Activated CD4-positive, alpha-beta memory T cell treated with anti-CD3 and anti-CD28 coated beads for 36 hours (primary cell): ENCODE measurements at regions of chr6 and their contacts with region 1.

Region 1: DNA sequence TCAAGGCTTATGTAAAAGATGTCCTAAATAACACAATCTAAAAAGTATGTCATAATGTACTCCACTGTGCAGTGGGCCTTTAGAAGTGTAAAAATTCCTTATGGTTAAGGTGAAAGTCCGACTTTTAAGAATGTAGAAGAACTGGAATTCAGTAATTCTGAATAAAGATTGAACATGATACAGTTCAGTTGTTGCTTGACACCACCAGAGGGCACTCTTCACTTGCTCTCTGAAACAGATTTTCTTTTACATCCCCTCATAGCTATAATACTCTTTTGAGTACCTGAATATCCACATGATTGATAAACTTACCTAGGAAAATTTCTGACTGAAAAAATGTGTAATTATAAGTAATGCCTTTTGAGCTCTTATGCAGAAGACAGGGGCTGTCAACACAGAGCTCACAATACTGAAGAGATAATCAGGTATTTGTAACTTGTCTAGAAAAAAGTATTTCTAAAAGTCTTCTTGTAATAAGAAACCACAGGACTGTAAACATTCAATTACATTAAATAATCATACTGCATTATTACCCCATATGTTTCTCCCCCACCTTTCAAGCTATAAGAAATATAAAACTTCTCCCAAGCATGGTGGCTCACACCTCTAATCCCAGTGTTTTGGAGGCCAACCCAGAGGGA is 92.1 kb downstream of the POPDC3 start:
- DNase-seq: no peak
- H3K4me3 Mint-ChIP-seq: no peak overlapping the region
- H3K27ac Mint-ChIP-seq: no peak overlapping the region
- H3K4me1 Mint-ChIP-seq: no peaks in the 10 kb centered on the region
- H3K27me3 Mint-ChIP-seq: peaks cover 3% of the 10 kb centered on the region

Region 2: DNA sequence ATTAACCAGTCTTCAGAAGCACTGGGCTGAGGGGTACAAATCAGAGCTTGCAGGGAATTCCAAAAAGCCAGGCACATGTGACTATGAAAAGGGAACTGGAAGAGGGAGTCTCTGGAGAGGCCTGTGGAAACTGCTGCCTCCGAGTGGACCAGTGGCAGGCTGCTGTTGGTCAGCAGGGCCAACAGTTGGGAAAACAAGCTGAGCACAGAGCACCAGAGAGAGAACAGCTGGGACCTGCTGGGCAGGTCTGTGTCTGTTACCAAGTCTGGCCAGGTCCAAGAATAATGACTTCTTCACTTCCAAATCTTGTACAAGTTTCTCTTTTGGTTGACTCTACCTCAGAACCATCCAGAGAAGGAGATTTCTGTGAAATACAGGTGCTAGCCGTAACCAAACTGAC is 49.4 kb before region 1 on chr6:
- CTCF ChIA-PET with region 1: no interaction called
- POLR2A ChIA-PET with region 1: no interaction called
- intact Hi-C with region 1: no loop called
- DNase-seq: no peak
- H3K4me3 Mint-ChIP-seq: no peak overlapping the region
- H3K27ac Mint-ChIP-seq: no peak overlapping the region
- H3K4me1 Mint-ChIP-seq: no peaks in the 10 kb centered on the region
- H3K27me3 Mint-ChIP-seq: peaks cover 6% of the 10 kb centered on the region

Region 3: DNA sequence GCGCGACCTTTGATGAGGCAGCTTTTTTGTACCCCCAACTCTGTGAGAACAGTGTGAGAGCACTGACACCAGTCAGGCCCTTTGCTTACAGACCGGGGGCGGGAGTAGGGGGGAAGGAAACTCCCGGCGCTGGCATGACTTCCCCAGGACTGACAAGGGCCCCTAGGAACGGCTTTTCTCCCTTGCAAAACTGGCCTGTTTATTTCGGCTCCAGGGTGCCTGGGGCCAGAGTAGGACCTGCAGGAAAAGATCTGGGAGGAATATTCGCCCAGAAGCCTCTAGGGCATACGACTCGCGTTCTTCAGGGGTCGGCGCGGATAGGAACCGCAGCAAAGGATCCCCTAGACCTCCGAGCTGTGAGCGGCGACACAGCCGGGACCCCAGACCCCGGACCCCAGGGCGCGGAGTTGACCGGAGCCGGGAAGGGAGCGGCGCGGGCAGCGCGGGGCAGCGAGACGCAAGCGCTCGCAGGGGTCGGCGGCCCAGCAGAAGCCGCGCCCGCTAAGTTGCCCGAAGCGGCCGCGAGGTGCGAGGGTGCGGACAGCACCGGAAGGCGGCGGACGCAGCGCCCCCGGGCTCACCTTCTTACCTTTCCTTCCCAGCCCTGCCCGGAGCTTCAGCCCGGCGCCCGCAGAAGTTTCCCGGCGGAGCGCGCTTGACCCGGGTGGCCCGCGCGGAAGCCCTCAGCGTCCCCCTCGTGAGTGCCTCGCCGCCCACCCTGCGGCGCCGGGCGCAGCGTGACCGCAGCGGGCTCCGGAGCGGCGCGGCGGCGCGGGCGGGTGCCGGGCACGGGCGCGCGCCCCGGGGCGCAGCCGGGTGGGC is 91.8 kb after region 1 on chr6 and contains the start of gene POPDC3:
- CTCF ChIA-PET with region 1: interaction called, 3 read pairs
- POLR2A ChIA-PET with region 1: no interaction called
- intact Hi-C with region 1: loop called (anchors 2 kb)
- DNase-seq: peak; percentile 10
- H3K4me3 Mint-ChIP-seq: no peak within 1 kb of the TSS
- H3K27ac Mint-ChIP-seq: no peak within 1 kb of the TSS
- H3K4me1 Mint-ChIP-seq: peaks cover 2% of the 10 kb centered on the region
- H3K27me3 Mint-ChIP-seq: peaks cover 41% of the 10 kb centered on the region
- total RNA-seq, gene POPDC3: not detected

Region 4: GRCh38 chr6:105263685-105264610 is 176.3 kb after region 1 on chr6:
- CTCF ChIA-PET with region 1: no interaction called
- POLR2A ChIA-PET with region 1: no interaction called
- intact Hi-C with region 1: loop called (anchors 10 kb)
- DNase-seq: no peak
- H3K4me3 Mint-ChIP-seq: no peak overlapping the region
- H3K27ac Mint-ChIP-seq: no peak overlapping the region
- H3K4me1 Mint-ChIP-seq: peaks cover 5% of the 10 kb centered on the region
- H3K27me3 Mint-ChIP-seq: peaks cover 3% of the 10 kb centered on the region

Region 5: DNA sequence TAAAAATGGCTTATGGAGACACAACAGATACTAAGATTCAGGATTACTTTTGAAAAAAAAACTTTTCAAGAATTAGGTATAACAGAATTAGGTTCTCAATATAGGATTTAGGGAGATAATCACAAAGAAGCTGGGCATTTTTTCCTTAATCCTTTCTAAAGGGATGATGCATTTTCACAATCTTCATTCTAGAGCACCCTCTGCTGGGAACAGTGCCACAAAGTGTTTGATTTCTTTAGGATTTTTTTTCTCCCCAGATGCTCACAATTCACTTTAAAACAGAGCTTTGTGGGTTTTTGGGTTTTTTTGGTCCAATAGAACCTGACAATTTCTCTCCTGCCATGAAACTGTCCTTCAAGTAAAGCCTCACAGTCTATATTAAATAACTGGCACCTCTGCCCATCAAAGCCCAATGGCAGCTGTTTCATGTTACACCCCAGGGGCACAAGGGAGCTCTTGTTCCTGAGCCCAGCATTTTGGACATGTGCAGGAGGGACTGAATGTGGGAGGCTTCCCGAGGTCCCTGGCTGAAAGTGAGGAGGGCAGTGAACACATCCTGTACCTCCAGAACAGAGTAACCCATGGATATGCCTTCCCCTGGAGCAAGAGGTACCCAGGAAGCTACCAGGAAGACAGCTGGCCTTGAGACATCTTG is 275.5 kb after region 1 on chr6:
- CTCF ChIA-PET with region 1: interaction called, 10 read pairs
- POLR2A ChIA-PET with region 1: no interaction called
- intact Hi-C with region 1: loop called (anchors 1 kb)
- DNase-seq: no peak
- H3K4me3 Mint-ChIP-seq: no peak overlapping the region
- H3K27ac Mint-ChIP-seq: no peak overlapping the region
- H3K4me1 Mint-ChIP-seq: peaks cover 22% of the 10 kb centered on the region
- H3K27me3 Mint-ChIP-seq: no peaks in the 10 kb centered on the region

Region 6: GRCh38 chr6:105424175-105424783 is 336.6 kb after region 1 on chr6:
- CTCF ChIA-PET with region 1: interaction called, 49 read pairs
- POLR2A ChIA-PET with region 1: no interaction called
- intact Hi-C with region 1: loop called (anchors 1 kb)
- DNase-seq: peak; percentile 75
- H3K4me3 Mint-ChIP-seq: no peak overlapping the region
- H3K27ac Mint-ChIP-seq: no peak overlapping the region
- H3K4me1 Mint-ChIP-seq: no peaks in the 10 kb centered on the region
- H3K27me3 Mint-ChIP-seq: no peaks in the 10 kb centered on the region